Motor neuron (in vitro differentiated cells): ENCODE measurements at regions of chr6 and their contacts with region 1.

Region 1: GRCh38 chr6:15621203-15622044 is 41.4 kb downstream of the DTNBP1 start:
- ATAC-seq: peak; percentile 67 to 100 (median 95)
- H3K4me3 ChIP-seq: no peak overlapping the region
- H3K27ac ChIP-seq: peak overlapping the region in 1 of 2 donors; percentile 70
- H3K4me1 ChIP-seq: peaks cover 15 to 24% of the 10 kb centered on the region in 2 donors

Region 2: GRCh38 chr6:14144678-14145113 is 1476.7 kb before region 1 on chr6:
- in situ Hi-C with region 1: loop called in 2 of 9 experiments (anchors 25 kb)
- ATAC-seq: peak in 5 of 8 experiments; percentile 42 to 91 (median 78)
- H3K4me3 ChIP-seq: no peak overlapping the region
- H3K27ac ChIP-seq: no peak overlapping the region
- H3K4me1 ChIP-seq: peaks cover 21 to 33% of the 10 kb centered on the region in 2 donors

Region 3: GRCh38 chr6:15429141-15430110 is 192.0 kb before region 1 on chr6:
- in situ Hi-C with region 1: no loop called
- ATAC-seq: peak in 3 of 8 experiments; percentile 21 to 75 (median 47)
- H3K4me3 ChIP-seq: no peak overlapping the region
- H3K27ac ChIP-seq: no peak overlapping the region
- H3K4me1 ChIP-seq: peaks cover 71 to 77% of the 10 kb centered on the region in 2 donors

Region 4: GRCh38 chr6:15504581-15505350 is 116.7 kb before region 1 on chr6:
- in situ Hi-C with region 1: loop called in 1 of 9 experiments (anchors 25 kb)
- ATAC-seq: peak; percentile 40 to 90 (median 67)
- H3K4me3 ChIP-seq: no peak overlapping the region
- H3K27ac ChIP-seq: no peak overlapping the region
- H3K4me1 ChIP-seq: peaks cover 0 to 4% of the 10 kb centered on the region in 2 donors